CD8-positive, alpha-beta T cell (primary cell): ENCODE measurements at regions of chr4 and their contacts with region 1.

Region 1: DNA sequence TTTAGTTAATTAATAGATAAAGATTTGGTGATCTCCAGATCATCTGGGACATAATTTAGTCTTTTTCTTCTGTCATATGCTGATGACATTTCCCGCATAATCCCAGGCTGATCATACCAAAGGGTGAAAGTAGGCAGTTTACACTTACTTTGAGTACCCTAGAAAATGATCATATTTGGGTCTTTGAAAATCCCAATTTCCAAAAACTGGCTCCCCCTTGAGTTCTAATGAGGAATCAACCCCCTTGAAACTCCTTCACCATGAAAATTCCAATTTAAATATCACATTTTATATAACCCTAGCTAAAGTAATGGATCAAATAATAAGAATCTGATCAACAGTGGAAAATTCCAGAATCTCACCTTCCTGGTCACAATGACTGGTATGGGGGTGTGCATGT is 223.4 kb downstream of the NAF1 start:
- DNase-seq: no peak
- ATAC-seq: no peak
- H3K4me3 ChIP-seq: no peak overlapping the region
- H3K4me3 Mint-ChIP-seq: no peak overlapping the region
- H3K27ac ChIP-seq: no peak overlapping the region
- H3K27ac Mint-ChIP-seq: no peak overlapping the region
- H3K4me1 ChIP-seq: no peaks in the 10 kb centered on the region
- H3K4me1 Mint-ChIP-seq: no peaks in the 10 kb centered on the region
- H3K27me3 ChIP-seq: no peaks in the 10 kb centered on the region
- H3K27me3 Mint-ChIP-seq: no peaks in the 10 kb centered on the region
- CTCF ChIP-seq: no peak

Region 2: DNA sequence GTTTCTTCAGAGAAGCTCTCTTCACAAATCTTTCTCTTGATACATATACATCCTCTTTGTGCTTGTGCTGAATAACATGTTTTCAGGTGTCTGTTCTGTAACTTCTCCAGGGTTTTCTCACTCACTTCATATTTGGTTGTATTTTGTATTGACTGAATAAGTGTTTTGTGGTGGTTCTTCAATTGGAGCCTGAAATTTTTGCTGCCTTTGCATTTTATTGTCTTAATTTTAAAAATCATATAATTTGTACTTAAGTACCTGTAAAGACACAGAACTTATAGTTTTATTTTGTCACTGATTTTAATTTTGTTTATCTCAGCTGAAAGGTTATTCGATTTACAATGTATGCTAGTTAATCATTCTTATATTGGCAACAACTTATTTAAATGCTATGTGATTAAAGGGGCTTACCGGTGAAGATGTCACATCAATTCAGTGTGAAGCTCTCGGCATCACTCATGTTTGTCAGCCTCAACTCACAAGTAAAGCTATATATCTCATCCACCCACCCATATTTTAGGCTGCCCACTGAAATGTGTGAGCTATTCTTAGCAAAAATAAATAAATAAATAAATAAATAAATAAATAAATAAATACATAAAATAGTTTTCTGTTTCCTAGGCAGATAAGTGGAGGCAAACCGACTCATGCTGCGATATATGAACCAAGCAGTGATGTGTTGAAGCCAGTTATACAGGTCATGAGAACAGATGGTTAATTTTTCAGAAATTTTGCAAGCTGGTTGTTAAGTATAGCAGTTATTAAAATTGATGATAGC is 703.1 kb before region 1 on chr4:
- CTCF ChIA-PET with region 1: no interaction called
- POLR2A ChIA-PET with region 1: no interaction called
- intact Hi-C with region 1: loop called in 1 of 2 experiments (anchors 5 kb)
- DNase-seq: no peak
- ATAC-seq: no peak
- H3K4me3 ChIP-seq: no peak overlapping the region
- H3K4me3 Mint-ChIP-seq: no peak overlapping the region
- H3K27ac ChIP-seq: no peak overlapping the region
- H3K27ac Mint-ChIP-seq: no peak overlapping the region
- H3K4me1 ChIP-seq: no peaks in the 10 kb centered on the region
- H3K4me1 Mint-ChIP-seq: no peaks in the 10 kb centered on the region
- H3K27me3 ChIP-seq: no peaks in the 10 kb centered on the region
- H3K27me3 Mint-ChIP-seq: no peaks in the 10 kb centered on the region
- CTCF ChIP-seq: no peak